K562 (cell line): ENCODE measurements at regions of chr4 and their contacts with region 1.

Region 1: DNA sequence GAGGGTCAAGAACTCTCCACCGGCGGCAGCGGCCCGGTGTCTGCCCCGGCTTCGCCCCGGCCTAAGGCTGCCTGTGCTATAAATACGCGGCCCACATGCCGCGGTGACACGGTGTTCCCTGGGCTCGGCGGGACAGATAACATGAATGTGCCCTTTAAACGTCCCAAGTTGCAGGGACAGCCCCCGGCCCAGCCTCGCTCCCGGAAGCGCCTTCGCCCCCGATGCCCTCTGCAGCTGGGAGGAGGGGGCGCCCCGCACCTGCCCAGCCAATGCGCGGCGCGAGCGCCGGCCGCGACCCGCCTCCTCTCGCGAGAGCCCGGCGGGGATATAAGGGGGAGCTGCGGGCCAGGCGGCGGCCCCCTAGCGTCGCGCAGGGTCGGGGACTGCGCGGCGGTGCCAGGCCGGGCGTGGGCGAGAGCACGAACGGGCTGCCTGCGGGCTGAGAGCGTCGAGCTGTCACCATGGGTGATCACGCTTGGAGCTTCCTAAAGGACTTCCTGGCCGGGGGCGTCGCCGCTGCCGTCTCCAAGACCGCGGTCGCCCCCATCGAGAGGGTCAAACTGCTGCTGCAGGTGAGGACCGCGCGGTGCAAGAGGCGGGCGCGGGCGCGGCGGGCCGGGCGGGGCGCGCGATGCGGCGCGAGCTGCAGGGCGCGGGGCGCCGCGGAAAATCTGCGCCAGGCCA is at the start of gene SLC25A4:
- DNase-seq: peak; percentile 88 to 96 (median 95)
- ATAC-seq: peak; percentile 98
- H3K4me3 ChIP-seq: peak within 1 kb of the TSS; percentile 64
- H3K27ac ChIP-seq: peak within 1 kb of the TSS; percentile 45; the same call in 2 of the 3 replicates
- H3K4me1 ChIP-seq: peaks cover 3 to 17% of the 10 kb centered on the region in 2 experiments; a peak in 4 of 5 replicates
- H3K27me3 ChIP-seq: no peaks in the 10 kb centered on the region
- CTCF ChIP-seq: peak; percentile 48 to 58 (median 54); a peak in 5 of 6 replicates
- EP300 ChIP-seq: no peak
- POLR2A ChIP-seq: peak; percentile 90
- RAD21 ChIP-seq: 0 out of 4 replicates have a peak, but pooled peaks of 1 of the 2 experiments have one; percentile 11
- polyA plus RNA-seq, gene SLC25A4: 8.3 to 13.6 TPM

Region 2: GRCh38 chr4:185304944-185305690 is 162.1 kb after region 1 on chr4:
- CTCF ChIA-PET with region 1: no interaction called
- POLR2A ChIA-PET with region 1: no interaction called
- in situ Hi-C with region 1: no loop called
- intact Hi-C with region 1: loop called (anchors 5 kb)
- DNase-seq: peak in 1 of 4 experiments; percentile 52
- ATAC-seq: peak; percentile 92
- H3K4me3 ChIP-seq: no peak overlapping the region
- H3K27ac ChIP-seq: no peak overlapping the region
- H3K4me1 ChIP-seq: no peaks in the 10 kb centered on the region
- H3K27me3 ChIP-seq: no peaks in the 10 kb centered on the region
- CTCF ChIP-seq: peak; percentile 61 to 66 (median 66)
- EP300 ChIP-seq: no peak
- POLR2A ChIP-seq: no peak
- RAD21 ChIP-seq: peak; percentile 55 to 71